Activated naive CD8-positive, alpha-beta T cell treated with anti-CD3 and anti-CD28 coated beads, Interleukin-2, amount 10 ng/mL, durations not matched to agents 7 days and 5 days (primary cell): ENCODE measurements at regions of chr2 and their contacts with region 1.

Region 1: GRCh38 chr2:38750891-38751595 is at the start of gene SRSF7:
- DNase-seq: peak; percentile 98
- ATAC-seq: peak; percentile 77
- H3K4me3 Mint-ChIP-seq: peak within 1 kb of the TSS; percentile 98
- H3K27ac Mint-ChIP-seq: peak within 1 kb of the TSS; percentile 100
- H3K4me1 Mint-ChIP-seq: peaks cover 47% of the 10 kb centered on the region
- H3K27me3 Mint-ChIP-seq: no peaks in the 10 kb centered on the region
- total RNA-seq, gene SRSF7: 315 to 318 TPM

Region 2: DNA sequence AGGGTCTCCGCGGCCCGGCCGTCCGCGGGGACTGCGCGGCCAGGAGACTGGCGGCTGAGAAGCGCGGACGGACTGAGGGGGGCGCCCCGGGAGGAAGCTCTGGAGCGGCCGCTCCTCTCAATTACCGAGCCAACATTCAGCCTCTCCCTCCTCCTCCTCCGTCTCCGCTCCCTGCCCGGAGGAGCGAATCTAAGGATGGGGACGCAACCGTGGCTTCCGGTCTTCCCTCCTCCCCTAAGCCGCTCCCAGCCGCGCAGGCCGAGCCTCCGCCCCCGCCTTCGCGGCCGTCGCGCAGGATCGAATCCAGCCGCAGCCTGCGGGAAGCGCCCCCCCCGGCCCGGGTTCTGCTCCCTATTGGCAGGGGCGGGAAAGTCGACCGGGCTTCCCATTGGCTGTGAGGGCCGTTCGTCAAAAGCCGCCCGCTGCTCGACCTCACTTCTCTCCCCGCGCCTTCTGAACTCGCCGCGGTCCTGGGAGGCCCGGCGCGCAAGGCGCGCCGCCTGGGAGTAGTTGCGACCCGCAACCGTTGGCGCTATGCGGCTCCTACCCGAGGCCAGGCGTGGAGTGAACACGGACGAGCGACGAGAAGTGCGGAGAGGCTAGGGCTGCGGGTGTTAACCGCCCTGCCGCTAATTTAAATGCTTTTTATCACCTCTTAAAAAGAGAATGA is 148.2 kb before region 1 on chr2 and contains the start of gene HNRNPLL:
- POLR2A ChIA-PET with region 1: interaction called, 38 read pairs
- DNase-seq: peak; percentile 96
- ATAC-seq: peak; percentile 86
- H3K4me3 Mint-ChIP-seq: peak within 1 kb of the TSS; percentile 94
- H3K27ac Mint-ChIP-seq: peak within 1 kb of the TSS; percentile 90
- H3K4me1 Mint-ChIP-seq: peaks cover 40% of the 10 kb centered on the region
- H3K27me3 Mint-ChIP-seq: no peaks in the 10 kb centered on the region
- total RNA-seq, gene HNRNPLL: 50.5 to 63.0 TPM

Region 3: GRCh38 chr2:38665854-38666555 is 85.0 kb before region 1 on chr2 and contains the start of gene GALM:
- POLR2A ChIA-PET with region 1: interaction called, 31 read pairs
- DNase-seq: peak; percentile 62
- ATAC-seq: peak; percentile 37
- H3K4me3 Mint-ChIP-seq: peak within 1 kb of the TSS; percentile 90
- H3K27ac Mint-ChIP-seq: peak within 1 kb of the TSS; percentile 92
- H3K4me1 Mint-ChIP-seq: peaks cover 51% of the 10 kb centered on the region
- H3K27me3 Mint-ChIP-seq: no peaks in the 10 kb centered on the region
- total RNA-seq, gene GALM: 28.3 to 30.2 TPM

Region 4: DNA sequence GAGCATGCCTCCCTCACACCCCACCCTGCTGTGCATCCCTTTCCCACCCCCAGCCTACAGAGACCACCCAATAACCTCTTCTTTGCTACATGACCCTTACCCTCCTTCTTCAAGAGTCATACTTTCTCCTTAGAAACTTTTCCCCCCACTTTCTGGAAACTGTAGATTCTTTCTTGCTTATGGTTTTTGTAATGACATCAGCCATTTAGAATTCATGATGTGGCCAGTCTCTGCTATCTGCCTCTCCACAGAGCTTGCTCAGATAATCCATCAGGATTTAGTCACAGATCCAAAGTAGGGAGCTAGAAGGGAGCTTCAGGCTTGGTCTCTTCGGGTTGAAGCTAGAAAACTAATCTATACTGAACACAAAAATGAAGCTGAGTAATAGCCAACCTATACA is 48.6 kb before region 1 on chr2:
- POLR2A ChIA-PET with region 1: no interaction called
- DNase-seq: no peak
- ATAC-seq: no peak
- H3K4me3 Mint-ChIP-seq: no peak overlapping the region
- H3K27ac Mint-ChIP-seq: no peak overlapping the region
- H3K4me1 Mint-ChIP-seq: peaks cover 29% of the 10 kb centered on the region
- H3K27me3 Mint-ChIP-seq: no peaks in the 10 kb centered on the region

Region 5: GRCh38 chr2:38763228-38763627 is 12.2 kb after region 1 on chr2:
- POLR2A ChIA-PET with region 1: interaction called, 62 read pairs
- DNase-seq: no peak
- ATAC-seq: peak; percentile 97
- H3K4me3 Mint-ChIP-seq: peak overlapping the region; percentile 25
- H3K27ac Mint-ChIP-seq: no peak overlapping the region
- H3K4me1 Mint-ChIP-seq: peaks cover 6% of the 10 kb centered on the region
- H3K27me3 Mint-ChIP-seq: peaks cover 4% of the 10 kb centered on the region

Region 6: GRCh38 chr2:38778687-38779082 is 27.6 kb after region 1 on chr2:
- POLR2A ChIA-PET with region 1: interaction called, 40 read pairs
- DNase-seq: no peak
- ATAC-seq: no peak
- H3K4me3 Mint-ChIP-seq: peak overlapping the region; percentile 99
- H3K27ac Mint-ChIP-seq: peak overlapping the region; percentile 98
- H3K4me1 Mint-ChIP-seq: peaks cover 17% of the 10 kb centered on the region
- H3K27me3 Mint-ChIP-seq: peaks cover 19% of the 10 kb centered on the region

Region 7: GRCh38 chr2:38791744-38792143 is 40.7 kb after region 1 on chr2:
- POLR2A ChIA-PET with region 1: no interaction called
- DNase-seq: no peak
- ATAC-seq: no peak
- H3K4me3 Mint-ChIP-seq: no peak overlapping the region
- H3K27ac Mint-ChIP-seq: no peak overlapping the region
- H3K4me1 Mint-ChIP-seq: no peaks in the 10 kb centered on the region
- H3K27me3 Mint-ChIP-seq: no peaks in the 10 kb centered on the region

Region 8: DNA sequence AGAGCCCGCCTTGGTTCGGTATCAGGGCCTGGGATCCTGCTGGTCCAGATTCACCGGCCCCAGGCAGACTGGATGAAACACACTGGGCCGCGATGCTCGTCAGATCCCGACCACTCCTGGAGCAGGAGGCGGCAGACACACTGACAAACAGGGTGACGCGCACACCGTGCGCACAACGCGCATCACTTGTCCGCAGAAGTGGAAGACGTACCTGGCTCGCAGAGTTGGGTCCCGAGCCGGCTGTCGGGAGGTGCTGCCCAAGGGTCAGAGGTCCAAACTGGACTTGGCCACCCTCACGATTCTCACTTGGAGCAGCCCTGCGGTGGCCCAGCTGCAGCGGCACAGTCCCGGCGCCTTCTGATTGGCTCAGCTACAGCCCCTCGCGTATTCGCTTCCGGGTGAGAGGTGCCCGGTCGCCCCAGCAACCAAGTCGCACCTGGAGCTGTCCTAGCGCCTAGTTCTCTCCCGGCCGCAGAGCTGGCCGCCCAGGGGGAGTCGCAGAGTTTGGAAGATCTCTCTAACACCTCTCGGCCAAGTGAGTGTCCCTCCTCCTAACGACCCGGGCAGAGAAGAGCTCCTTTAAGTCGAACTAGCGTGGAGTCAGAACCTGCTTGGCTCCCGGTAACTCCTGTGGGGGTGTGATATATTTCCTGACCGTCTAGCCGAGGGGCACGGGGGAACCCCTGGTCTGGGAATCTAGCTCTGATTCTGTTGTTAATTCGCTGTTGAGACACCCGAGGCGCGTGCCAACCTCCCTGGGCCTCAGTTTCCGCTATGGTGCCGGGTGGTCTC is 124.7 kb after region 1 on chr2 and contains the starts of genes DHX57 and MORN2:
- POLR2A ChIA-PET with region 1: interaction called, 19 read pairs
- DNase-seq: peak; percentile 84
- ATAC-seq: peak; percentile 99
- H3K4me3 Mint-ChIP-seq: peak within 1 kb of the TSS; percentile 97
- H3K27ac Mint-ChIP-seq: peak within 1 kb of the TSS; percentile 86
- H3K4me1 Mint-ChIP-seq: peaks cover 15% of the 10 kb centered on the region
- H3K27me3 Mint-ChIP-seq: no peaks in the 10 kb centered on the region
- total RNA-seq, gene DHX57: 14.8 to 16.3 TPM
- total RNA-seq, gene MORN2: 1.0 to 2.2 TPM